HEK293 (cell line): ENCODE measurements at regions of chr20 and their contacts with region 1.

Region 1: DNA sequence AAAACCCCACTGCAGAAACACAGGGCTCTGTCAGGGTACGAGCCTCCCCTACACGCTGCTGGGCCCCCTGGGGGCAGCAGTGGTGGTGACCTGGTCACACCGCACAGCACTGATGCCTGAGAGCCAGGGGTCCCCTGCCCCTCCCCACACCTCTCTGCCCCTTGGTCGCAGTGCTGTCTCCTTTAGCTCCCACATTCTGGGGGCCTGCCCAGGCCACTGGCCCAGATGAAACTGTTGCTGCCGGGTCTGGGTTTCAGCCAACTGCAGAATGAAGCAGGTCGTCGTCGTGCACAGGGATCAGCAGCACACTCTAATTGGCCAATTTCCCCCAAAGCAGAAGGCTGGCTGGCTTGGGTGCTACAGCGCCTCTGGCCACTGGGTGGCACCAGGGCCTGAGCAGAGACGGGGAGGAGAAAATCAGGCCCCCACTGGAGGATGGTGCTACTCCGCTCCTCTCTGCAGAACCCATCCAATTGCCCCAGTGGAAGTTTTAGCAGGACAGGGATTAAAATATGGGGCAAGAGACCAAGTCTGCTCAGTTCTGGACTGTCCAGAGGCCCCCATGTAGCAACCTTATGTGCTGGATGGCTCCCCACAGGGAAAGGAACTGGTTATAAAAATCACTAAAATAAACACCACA is 26.1 kb downstream of the DIDO1 start:
- H3K4me3 ChIP-seq: no peak overlapping the region
- H3K27ac ChIP-seq: no peak overlapping the region
- H3K4me1 ChIP-seq: no peaks in the 10 kb centered on the region; the same call in 1 of the 2 replicates
- CTCF ChIP-seq: peak; percentile 91

Region 2: DNA sequence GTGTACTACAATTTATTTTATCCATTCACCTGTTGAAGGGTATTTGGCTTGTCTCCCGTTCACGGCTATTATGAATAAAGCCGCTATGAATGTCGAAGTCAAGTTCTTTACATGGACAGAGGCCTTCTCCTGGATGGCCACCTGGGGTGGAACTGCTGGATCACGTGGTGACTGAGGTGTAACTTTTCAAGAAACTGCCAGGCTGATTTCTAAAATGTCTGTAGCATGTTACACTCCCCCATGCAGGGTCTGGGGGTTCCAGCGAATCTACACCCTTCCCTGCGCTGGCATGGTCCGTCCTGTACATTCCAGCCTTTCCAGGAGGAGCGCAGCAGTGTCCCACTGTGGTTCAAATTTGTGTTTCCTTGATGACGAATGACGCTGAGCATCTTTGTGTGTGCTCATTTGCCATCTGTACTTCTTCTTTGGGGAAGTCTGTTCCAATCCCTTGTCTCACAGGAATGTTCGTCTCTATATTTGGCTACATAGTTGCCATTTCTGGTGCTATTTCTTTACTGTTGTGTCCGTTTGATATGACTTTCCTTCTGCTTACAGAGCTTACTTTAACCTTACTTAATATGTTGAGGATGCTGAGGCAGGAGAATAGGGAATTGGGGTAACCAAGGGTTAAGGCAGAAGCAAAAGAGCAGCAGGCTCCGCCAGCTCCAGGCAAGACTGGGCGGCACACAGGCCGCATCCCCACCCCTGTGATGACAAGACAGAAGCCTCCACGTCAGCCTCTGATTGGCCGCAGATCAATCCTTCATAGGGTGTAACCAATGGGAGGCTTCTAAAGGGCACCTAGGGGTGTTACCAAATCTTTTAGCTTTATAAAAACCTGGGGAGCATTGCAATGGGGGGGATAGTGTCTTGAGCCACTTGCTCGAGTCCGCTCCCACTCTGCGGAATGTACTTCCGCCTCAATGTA is 941.1 kb before region 1 on chr20:
- CTCF ChIA-PET with region 1: no interaction called
- POLR2A ChIA-PET with region 1: no interaction called
- H3K4me3 ChIP-seq: no peak overlapping the region
- H3K27ac ChIP-seq: no peak overlapping the region
- H3K4me1 ChIP-seq: peaks cover 15% of the 10 kb centered on the region
- CTCF ChIP-seq: no peak

Region 3: GRCh38 chr20:62887147-62887859 is 12.9 kb before region 1 on chr20:
- CTCF ChIA-PET with region 1: interaction called, 11 read pairs
- POLR2A ChIA-PET with region 1: interaction called, 3 read pairs
- H3K4me3 ChIP-seq: no peak overlapping the region
- H3K27ac ChIP-seq: peak overlapping the region; percentile 11; the same call in 1 of the 2 replicates
- H3K4me1 ChIP-seq: peaks cover 3% of the 10 kb centered on the region; the same call in 1 of the 2 replicates
- CTCF ChIP-seq: no peak

Region 4: DNA sequence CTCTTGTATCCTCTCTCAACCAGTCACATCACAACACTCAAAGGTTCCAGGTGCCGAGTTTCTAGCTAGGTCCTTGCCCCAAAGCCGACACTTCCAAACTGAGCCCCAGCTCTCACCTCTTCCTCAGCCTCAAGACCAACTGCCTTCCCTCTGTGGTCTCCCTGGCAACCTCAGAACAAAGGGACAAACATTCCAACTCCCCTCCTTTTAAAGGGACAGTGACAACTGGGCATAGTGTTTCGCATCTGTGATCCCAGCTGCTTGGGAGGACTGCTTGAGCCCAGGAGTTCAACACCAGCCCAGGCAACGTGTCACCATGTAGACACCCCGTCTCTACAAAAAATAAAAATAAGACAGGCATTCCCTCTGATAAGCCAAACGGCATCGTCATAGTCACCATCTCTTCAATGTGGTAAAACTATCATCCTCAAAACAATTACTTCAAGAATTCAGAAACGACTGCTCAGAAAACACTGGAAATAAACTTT is 14.8 kb after region 1 on chr20:
- CTCF ChIA-PET with region 1: interaction called, 33 read pairs
- POLR2A ChIA-PET with region 1: no interaction called
- H3K4me3 ChIP-seq: no peak overlapping the region
- H3K27ac ChIP-seq: no peak overlapping the region
- H3K4me1 ChIP-seq: peaks cover 44% of the 10 kb centered on the region
- CTCF ChIP-seq: no peak

Region 5: DNA sequence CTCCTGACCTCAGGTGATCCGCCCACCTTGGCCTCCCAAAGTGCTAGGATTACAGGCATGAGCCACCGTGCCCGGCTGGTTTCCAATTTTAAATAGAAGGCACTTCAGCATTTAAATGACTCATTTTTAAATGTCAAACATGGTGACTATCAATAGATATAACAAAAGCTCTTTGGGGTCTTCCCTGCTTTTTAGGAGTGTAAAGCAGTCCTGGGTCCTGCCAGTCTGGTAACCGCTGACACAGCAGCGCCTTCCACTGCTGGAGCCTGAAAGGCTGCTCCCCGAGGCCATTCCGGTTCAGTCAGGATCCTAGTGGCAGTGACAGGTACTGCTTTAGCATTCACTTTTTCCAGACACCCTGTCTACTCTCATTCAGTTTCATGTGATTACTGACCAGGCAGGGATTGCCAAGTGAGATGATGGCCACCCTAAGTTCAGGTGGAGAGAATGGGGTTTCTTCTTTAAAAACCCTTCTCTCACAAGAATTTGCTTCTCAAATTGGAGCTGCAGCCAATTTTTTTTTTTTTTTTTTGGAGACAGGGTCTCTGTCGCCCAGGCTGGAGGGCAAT is 21.0 kb after region 1 on chr20:
- CTCF ChIA-PET with region 1: interaction called, 33 read pairs
- POLR2A ChIA-PET with region 1: no interaction called
- H3K4me3 ChIP-seq: no peak overlapping the region
- H3K27ac ChIP-seq: no peak overlapping the region
- H3K4me1 ChIP-seq: peaks cover 52% of the 10 kb centered on the region
- CTCF ChIP-seq: peak; percentile 60

Region 6: DNA sequence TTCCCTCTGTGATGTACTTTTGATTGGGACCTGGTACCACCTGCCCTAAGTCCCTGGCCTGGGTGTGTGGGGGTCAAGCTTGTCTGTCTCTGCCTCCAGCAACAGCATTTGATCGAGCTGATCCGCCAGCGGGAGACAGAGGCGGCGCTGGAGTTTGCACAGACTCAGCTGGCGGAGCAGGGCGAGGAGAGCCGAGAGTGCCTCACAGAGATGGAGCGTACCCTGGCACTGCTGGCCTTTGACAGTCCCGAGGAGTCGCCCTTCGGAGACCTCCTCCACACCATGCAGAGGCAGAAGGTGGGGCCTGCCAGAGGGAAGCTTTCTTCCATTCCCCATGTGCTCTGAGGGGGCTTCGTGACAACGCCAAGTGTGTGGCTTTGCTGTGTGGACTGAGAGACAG is 43.2 kb after region 1 on chr20:
- CTCF ChIA-PET with region 1: interaction called, 3 read pairs
- POLR2A ChIA-PET with region 1: interaction called, 10 read pairs
- H3K4me3 ChIP-seq: no peak overlapping the region
- H3K27ac ChIP-seq: no peak overlapping the region
- H3K4me1 ChIP-seq: peaks cover 9% of the 10 kb centered on the region; the same call in 1 of the 2 replicates
- CTCF ChIP-seq: no peak

Region 7: GRCh38 chr20:63009045-63009961 is 109.1 kb after region 1 on chr20:
- CTCF ChIA-PET with region 1: interaction called, 12 read pairs
- POLR2A ChIA-PET with region 1: no interaction called
- H3K4me3 ChIP-seq: no peak overlapping the region
- H3K27ac ChIP-seq: no peak overlapping the region
- H3K4me1 ChIP-seq: no peaks in the 10 kb centered on the region
- CTCF ChIP-seq: peak; percentile 94